ENCODE measurements at regions of chr6 and their contacts with region 1.

Region 1: GRCh38 chr6:18400831-18401446 is 13.8 kb downstream of the RNF144B start:
- DNase-seq: peak; percentile 53
- ATAC-seq: peak; percentile 95
- H3K4me3 ChIP-seq: peak overlapping the region; percentile 13; the same call in 1 of the 2 replicates
- H3K27ac ChIP-seq: peak overlapping the region; percentile 68
- H3K4me1 ChIP-seq: peaks cover 10% of the 10 kb centered on the region
- H3K27me3 ChIP-seq: no peaks in the 10 kb centered on the region
- CTCF ChIP-seq: no peak
- EP300 ChIP-seq: peak in 1 of 2 experiments; percentile 58; a peak in 2 of 4 replicates
- POLR2A ChIP-seq: no peak
- RAD21 ChIP-seq: no peak

Region 2: DNA sequence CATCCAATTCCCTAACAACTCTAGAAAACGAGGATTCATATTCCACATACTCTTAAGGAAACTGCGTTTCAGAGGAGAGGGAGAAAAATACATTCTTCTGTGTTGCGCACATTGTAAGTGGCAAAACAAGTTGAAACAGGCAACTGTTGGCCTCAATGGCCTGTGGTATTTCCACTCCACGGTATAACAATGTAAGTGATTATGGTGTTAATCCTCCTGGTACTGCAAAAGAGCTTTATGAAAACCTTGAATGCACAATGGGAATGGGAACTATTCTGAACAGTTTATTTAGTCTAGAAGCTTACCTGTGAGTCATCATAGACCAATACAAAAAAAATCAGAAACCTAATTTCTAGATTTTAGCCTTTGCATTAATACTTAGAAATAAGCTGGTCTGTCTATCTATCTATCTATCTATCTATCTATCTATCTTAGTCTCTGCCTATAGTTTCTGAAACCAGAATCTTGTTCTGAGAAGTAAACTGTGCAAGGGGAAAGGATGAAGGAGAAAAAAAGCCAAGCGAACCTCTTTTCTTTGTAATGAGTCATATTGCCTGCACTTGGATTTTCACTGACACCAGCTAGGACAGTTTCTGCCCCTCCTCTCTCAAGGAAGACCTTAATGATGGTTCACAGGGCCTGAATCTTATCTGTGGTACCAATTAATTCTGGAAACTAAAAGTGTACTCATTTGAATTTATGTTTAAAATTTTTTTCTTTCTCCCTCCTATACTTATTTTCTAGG is 87.8 kb after region 1 on chr6:
- CTCF ChIA-PET with region 1: no interaction called
- POLR2A ChIA-PET with region 1: no interaction called
- RAD21 ChIA-PET with region 1: no interaction called
- SMC1A ChIA-PET with region 1: no interaction called
- in situ Hi-C with region 1: no loop called
- intact Hi-C with region 1: loop called (anchors 5 kb)
- DNase-seq: no peak
- ATAC-seq: no peak
- H3K4me3 ChIP-seq: no peak overlapping the region
- H3K27ac ChIP-seq: no peak overlapping the region
- H3K4me1 ChIP-seq: no peaks in the 10 kb centered on the region
- H3K27me3 ChIP-seq: no peaks in the 10 kb centered on the region
- CTCF ChIP-seq: no peak
- EP300 ChIP-seq: no peak
- POLR2A ChIP-seq: no peak
- RAD21 ChIP-seq: no peak

Region 3: GRCh38 chr6:18503593-18504231 is 102.8 kb after region 1 on chr6:
- CTCF ChIA-PET with region 1: interaction called, 4 read pairs
- POLR2A ChIA-PET with region 1: no interaction called
- RAD21 ChIA-PET with region 1: no interaction called
- SMC1A ChIA-PET with region 1: no interaction called
- in situ Hi-C with region 1: no loop called
- intact Hi-C with region 1: loop called (anchors 5 kb)
- DNase-seq: peak; percentile 35
- ATAC-seq: peak; percentile 94
- H3K4me3 ChIP-seq: no peak overlapping the region
- H3K27ac ChIP-seq: no peak overlapping the region
- H3K4me1 ChIP-seq: no peaks in the 10 kb centered on the region
- H3K27me3 ChIP-seq: no peaks in the 10 kb centered on the region
- CTCF ChIP-seq: peak; percentile 87 to 96 (median 90); a peak in 5 of 6 replicates
- EP300 ChIP-seq: peak in 1 of 2 experiments; percentile 16; a peak in 1 of 4 replicates
- POLR2A ChIP-seq: no peak
- RAD21 ChIP-seq: peak; percentile 100